B cell (primary cell): ENCODE measurements at regions of chr2 and their contacts with region 1.

Region 1: DNA sequence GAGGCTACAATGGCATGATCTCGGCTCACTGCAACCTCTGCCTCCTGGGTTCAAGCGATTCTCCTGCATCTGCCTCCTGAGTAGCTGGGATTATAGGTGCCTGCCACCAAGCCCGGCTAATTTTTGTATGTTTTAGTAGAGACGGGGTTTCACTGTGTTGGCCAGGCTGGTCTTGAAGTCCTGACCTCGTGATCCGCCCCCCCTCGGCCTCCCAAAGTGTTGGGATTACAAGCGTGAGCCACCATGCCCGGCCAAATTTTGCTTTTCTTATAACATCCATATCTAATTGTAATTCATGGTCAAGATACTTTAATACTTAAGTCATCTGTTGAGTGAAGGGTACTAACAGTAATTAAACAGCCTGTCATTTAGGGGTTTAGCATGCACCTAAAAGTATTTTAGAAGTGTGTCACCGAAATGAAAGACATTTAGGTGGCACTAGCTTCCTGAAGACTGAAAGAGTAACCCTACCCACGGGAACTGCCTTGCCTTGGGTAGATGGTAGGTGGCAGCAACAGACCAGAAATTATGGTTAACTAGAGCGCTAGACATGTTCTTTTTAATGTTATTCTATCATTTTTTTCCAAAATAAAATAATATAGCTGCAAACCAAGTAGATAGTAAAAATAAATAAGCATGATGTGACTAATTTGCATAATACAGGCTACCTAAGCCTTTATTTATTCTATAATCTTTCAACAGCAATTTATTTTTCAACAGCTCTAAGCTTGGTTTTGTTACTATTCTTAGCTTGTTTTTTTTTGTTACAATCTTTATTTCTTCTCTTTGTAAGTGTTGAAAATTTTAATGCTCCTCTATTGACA is 8.6 kb upstream of the ACYP2 start:
- DNase-seq: peak; percentile 74
- ATAC-seq: peak; percentile 31
- H3K4me3 ChIP-seq: no peak overlapping the region
- H3K4me3 Mint-ChIP-seq: peak overlapping the region; percentile 18
- H3K27ac ChIP-seq: no peak overlapping the region
- H3K27ac Mint-ChIP-seq: peak overlapping the region; percentile 41
- H3K4me1 ChIP-seq: peaks cover 39 to 40% of the 10 kb centered on the region in 2 donors
- H3K4me1 Mint-ChIP-seq: peaks cover 53% of the 10 kb centered on the region
- H3K27me3 ChIP-seq: no peaks in the 10 kb centered on the region
- H3K27me3 Mint-ChIP-seq: no peaks in the 10 kb centered on the region
- CTCF ChIP-seq: peak; percentile 80

Region 2: DNA sequence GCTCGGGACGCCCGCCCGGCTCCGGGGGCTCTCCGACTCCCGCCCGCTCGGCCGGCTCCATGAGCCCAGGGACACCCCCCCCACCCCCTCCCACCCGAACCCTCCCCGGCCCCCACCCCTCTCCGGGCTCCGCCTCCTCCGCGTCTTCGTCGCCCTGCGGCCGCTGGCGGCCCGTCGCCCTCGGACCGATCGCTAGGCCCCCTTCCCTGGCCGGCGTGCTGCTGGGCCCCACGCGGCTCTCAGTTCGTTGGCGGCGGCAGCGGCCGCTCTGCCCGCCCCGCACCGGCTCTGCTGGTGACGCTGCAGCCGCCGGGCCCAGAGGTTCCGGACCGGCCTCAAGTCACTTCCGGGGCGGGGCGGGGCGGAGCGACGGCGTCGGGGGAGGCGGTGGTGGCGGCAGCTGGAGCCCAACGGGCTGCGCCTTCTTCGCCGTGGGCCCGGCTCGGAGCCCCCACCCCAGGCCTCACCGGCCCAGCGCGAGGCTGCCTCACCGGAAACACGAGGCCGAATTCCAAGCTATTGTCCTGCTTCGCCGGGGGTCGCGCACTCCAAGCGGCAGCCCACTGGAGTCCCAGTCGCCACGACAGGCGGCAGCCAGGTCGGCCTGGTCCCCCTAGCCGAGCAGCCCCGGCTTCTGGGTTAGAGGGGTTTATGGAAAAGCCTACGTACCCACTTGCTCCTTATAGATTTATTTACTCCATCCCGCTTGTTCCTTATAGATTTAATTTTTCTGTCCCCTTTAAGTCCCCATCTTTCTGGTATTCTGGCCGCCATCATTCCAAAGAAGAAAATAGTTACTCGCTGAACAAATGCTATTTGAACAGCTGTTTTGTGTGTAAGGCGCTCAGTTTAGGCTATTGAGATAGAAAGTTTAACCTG is 135.9 kb before region 1 on chr2 and contains the start of gene PSME4:
- CTCF ChIA-PET with region 1: interaction called, 11 read pairs
- POLR2A ChIA-PET with region 1: interaction called, 3 read pairs
- intact Hi-C with region 1: no loop called
- DNase-seq: peak; percentile 93
- ATAC-seq: peak; percentile 89
- H3K4me3 ChIP-seq: peak within 1 kb of the TSS; percentile 71 to 98 (median 95)
- H3K4me3 Mint-ChIP-seq: peak within 1 kb of the TSS; percentile 94
- H3K27ac ChIP-seq: peak within 1 kb of the TSS; percentile 71 to 89
- H3K27ac Mint-ChIP-seq: peak within 1 kb of the TSS; percentile 91
- H3K4me1 ChIP-seq: peaks cover 31 to 33% of the 10 kb centered on the region in 2 donors
- H3K4me1 Mint-ChIP-seq: peaks cover 47% of the 10 kb centered on the region
- H3K27me3 ChIP-seq: no peaks in the 10 kb centered on the region
- H3K27me3 Mint-ChIP-seq: no peaks in the 10 kb centered on the region
- CTCF ChIP-seq: no peak
- total RNA-seq, gene PSME4: 59.9 and 61.9 TPM in 2 replicates

Region 3: DNA sequence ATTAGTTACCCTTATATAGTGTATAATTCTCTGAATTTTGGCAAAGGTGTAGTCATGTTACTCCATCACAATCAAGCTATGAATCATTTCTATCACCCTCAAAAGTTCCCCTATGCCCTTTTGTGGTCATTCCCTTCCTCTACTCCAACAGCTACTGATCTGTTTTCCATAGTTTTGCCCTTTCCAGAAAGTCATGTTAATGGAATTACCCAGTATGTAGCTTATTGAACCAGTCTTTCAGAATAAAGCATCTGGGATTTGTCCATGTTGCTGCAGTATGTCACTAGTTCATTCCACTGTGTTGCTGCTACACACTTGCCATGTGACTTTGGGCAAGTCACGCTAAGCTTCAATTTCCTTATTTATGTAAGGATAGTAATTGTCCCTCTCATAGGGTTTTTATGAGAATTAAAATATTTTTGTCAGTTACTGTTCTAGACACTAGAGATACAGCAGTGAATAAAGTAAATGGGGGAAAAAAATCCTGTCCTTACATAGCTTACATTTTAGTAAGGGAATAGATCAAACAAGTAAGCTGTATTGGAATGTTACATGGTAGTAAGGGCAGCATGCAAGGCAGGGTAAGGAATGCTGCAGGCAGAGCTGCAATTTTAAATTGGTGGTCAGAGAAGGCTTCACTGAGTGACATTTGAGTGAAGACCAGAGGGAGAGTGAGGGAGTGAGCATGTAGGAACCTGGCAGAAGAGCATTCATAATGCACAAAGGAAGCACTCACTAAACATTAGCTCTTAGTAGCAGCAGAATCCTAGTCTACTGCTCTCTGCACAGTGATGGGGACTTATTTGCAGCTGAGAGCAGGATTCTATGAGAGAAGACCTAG is 229.5 kb after region 1 on chr2:
- CTCF ChIA-PET with region 1: no interaction called
- POLR2A ChIA-PET with region 1: no interaction called
- intact Hi-C with region 1: loop called (anchors 5 kb)
- DNase-seq: no peak
- ATAC-seq: no peak
- H3K4me3 ChIP-seq: no peak overlapping the region
- H3K4me3 Mint-ChIP-seq: no peak overlapping the region
- H3K27ac ChIP-seq: no peak overlapping the region
- H3K27ac Mint-ChIP-seq: no peak overlapping the region
- H3K4me1 ChIP-seq: peaks cover 5% of the 10 kb centered on the region in 2 donors
- H3K4me1 Mint-ChIP-seq: peaks cover 2% of the 10 kb centered on the region
- H3K27me3 ChIP-seq: peaks cover 0 to 10% (median 5%) of the 10 kb centered on the region in 4 experiments
- H3K27me3 Mint-ChIP-seq: peaks cover 15% of the 10 kb centered on the region
- CTCF ChIP-seq: no peak

Region 4: DNA sequence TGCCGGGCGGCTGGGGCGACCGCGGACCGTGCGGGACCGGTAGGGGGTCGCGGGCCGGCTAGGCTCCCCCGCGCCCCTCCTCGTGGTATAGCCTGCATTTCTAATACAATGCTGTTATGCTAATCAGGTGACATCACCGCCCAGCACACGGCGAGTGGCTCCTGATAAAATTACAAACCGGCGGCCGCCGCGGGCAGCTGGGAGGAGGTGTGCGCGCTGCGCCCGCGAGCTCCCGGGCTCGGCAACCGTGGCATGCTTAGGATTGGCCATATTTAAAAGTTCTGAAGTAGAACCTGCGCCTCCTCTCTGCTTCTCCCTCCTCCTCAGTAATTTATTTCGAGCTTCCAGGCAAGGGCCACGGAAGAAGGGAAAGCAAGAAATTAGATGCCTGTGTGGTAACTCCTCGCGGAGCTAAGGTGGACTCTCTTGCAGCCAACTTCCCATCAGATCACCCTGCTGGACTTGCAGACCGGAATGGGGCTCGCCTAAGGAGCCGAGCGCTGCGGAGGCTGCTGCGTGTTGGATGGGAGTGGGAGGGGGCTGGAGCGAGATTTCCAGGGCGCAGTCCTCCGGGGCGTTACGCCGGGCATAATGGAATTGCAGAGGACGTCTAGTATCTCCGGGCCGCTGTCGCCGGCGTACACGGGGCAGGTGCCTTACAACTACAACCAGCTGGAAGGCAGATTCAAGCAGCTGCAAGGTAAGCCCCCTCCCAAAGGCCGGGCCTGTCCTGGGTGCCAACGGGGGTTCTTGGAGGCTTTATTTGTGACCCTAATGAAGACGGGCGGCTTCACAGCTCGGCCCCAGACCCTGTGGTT is 451.6 kb after region 1 on chr2:
- CTCF ChIA-PET with region 1: interaction called, 8 read pairs
- POLR2A ChIA-PET with region 1: no interaction called
- intact Hi-C with region 1: loop called (anchors 10 kb)
- DNase-seq: peak; percentile 80
- ATAC-seq: peak; percentile 65
- H3K4me3 ChIP-seq: peak overlapping the region; percentile 91 to 99 (median 97)
- H3K4me3 Mint-ChIP-seq: peak overlapping the region; percentile 94
- H3K27ac ChIP-seq: peak overlapping the region; percentile 81 to 92
- H3K27ac Mint-ChIP-seq: peak overlapping the region; percentile 90
- H3K4me1 ChIP-seq: peaks cover 30 to 35% of the 10 kb centered on the region in 2 donors
- H3K4me1 Mint-ChIP-seq: peaks cover 54% of the 10 kb centered on the region
- H3K27me3 ChIP-seq: no peaks in the 10 kb centered on the region
- H3K27me3 Mint-ChIP-seq: no peaks in the 10 kb centered on the region
- CTCF ChIP-seq: no peak

Region 5: GRCh38 chr2:54704688-54705605 is 598.1 kb after region 1 on chr2:
- CTCF ChIA-PET with region 1: interaction called, 86 read pairs
- POLR2A ChIA-PET with region 1: no interaction called
- intact Hi-C with region 1: loop called (anchors 1 kb)
- DNase-seq: peak; percentile 74
- ATAC-seq: peak; percentile 55
- H3K4me3 ChIP-seq: no peak overlapping the region
- H3K4me3 Mint-ChIP-seq: no peak overlapping the region
- H3K27ac ChIP-seq: no peak overlapping the region
- H3K27ac Mint-ChIP-seq: no peak overlapping the region
- H3K4me1 ChIP-seq: peaks cover 14 to 15% of the 10 kb centered on the region in 2 donors
- H3K4me1 Mint-ChIP-seq: peaks cover 11% of the 10 kb centered on the region
- H3K27me3 ChIP-seq: peaks cover 0 to 16% (median 12%) of the 10 kb centered on the region in 4 experiments
- H3K27me3 Mint-ChIP-seq: peaks cover 11% of the 10 kb centered on the region
- CTCF ChIP-seq: peak; percentile 80

Region 6: GRCh38 chr2:55050133-55050994 is 943.5 kb after region 1 on chr2 and contains the start of gene RTN4:
- CTCF ChIA-PET with region 1: interaction called, 3 read pairs
- POLR2A ChIA-PET with region 1: no interaction called
- intact Hi-C with region 1: loop called (anchors 5 kb)
- DNase-seq: peak; percentile 99
- ATAC-seq: peak; percentile 85
- H3K4me3 ChIP-seq: peak within 1 kb of the TSS; percentile 67 to 95 (median 89)
- H3K4me3 Mint-ChIP-seq: peak within 1 kb of the TSS; percentile 100
- H3K27ac ChIP-seq: peak within 1 kb of the TSS; percentile 82 to 89
- H3K27ac Mint-ChIP-seq: peak within 1 kb of the TSS; percentile 100
- H3K4me1 ChIP-seq: peaks cover 48 to 52% of the 10 kb centered on the region in 2 donors
- H3K4me1 Mint-ChIP-seq: peaks cover 71% of the 10 kb centered on the region
- H3K27me3 ChIP-seq: no peaks in the 10 kb centered on the region
- H3K27me3 Mint-ChIP-seq: no peaks in the 10 kb centered on the region
- CTCF ChIP-seq: no peak
- total RNA-seq, gene RTN4: 63.3 and 65.9 TPM in 2 replicates

Region 7: GRCh38 chr2:55431982-55432627 is 1325.3 kb after region 1 on chr2:
- CTCF ChIA-PET with region 1: no interaction called
- POLR2A ChIA-PET with region 1: no interaction called
- intact Hi-C with region 1: loop called (anchors 5 kb)
- DNase-seq: peak; percentile 45
- ATAC-seq: peak; percentile 24
- H3K4me3 ChIP-seq: no peak overlapping the region
- H3K4me3 Mint-ChIP-seq: no peak overlapping the region
- H3K27ac ChIP-seq: no peak overlapping the region
- H3K27ac Mint-ChIP-seq: no peak overlapping the region
- H3K4me1 ChIP-seq: no peaks in the 10 kb centered on the region
- H3K4me1 Mint-ChIP-seq: no peaks in the 10 kb centered on the region
- H3K27me3 ChIP-seq: no peaks in the 10 kb centered on the region
- H3K27me3 Mint-ChIP-seq: no peaks in the 10 kb centered on the region
- CTCF ChIP-seq: peak; percentile 71